HepG2 (cell line): ENCODE measurements at regions of chr20 and their contacts with region 1.

Region 1: DNA sequence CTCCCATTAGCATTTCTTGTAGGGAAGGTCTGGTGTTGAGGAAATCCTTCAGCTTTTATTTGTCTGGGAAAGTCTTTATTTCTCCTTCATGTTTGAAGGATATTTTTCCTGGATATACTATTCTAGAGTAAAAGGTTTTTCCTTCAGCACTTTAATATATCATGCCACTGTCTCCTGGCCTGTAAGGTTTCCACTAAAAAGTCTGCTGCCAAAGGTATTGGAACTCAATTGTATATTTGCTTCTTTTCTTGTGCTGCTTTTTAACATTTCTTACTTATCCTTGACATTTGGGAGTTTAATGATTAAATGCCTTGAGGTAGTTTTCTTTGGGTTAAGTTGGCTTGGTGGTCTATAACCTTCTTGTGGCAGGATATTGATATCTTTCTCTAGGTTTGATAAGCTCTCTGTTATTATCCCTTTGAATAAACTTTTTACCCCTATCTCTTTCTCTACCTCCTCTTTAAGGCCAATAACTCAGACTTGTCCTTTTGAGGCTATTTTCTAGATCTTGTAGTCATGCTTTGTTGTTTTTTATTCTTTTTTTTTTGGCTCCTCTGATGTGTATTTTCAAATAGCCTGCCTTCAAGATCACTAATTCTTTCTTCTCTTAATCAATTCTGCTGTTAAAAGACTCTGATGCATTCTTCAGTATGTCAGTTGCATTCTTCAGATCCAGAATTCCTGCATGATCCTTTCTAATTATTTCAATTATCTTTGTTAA is 225.0 kb upstream of the ZNF217 start:
- DNase-seq: no peak
- ATAC-seq: no peak
- H3K4me3 ChIP-seq: no peak overlapping the region
- H3K27ac ChIP-seq: no peak overlapping the region
- H3K4me1 ChIP-seq: peaks cover 10% of the 10 kb centered on the region; the same call in 1 of the 2 replicates
- H3K27me3 ChIP-seq: no peaks in the 10 kb centered on the region
- CTCF ChIP-seq: no peak
- EP300 ChIP-seq: no peak
- POLR2A ChIP-seq: no peak
- RAD21 ChIP-seq: no peak

Region 2: DNA sequence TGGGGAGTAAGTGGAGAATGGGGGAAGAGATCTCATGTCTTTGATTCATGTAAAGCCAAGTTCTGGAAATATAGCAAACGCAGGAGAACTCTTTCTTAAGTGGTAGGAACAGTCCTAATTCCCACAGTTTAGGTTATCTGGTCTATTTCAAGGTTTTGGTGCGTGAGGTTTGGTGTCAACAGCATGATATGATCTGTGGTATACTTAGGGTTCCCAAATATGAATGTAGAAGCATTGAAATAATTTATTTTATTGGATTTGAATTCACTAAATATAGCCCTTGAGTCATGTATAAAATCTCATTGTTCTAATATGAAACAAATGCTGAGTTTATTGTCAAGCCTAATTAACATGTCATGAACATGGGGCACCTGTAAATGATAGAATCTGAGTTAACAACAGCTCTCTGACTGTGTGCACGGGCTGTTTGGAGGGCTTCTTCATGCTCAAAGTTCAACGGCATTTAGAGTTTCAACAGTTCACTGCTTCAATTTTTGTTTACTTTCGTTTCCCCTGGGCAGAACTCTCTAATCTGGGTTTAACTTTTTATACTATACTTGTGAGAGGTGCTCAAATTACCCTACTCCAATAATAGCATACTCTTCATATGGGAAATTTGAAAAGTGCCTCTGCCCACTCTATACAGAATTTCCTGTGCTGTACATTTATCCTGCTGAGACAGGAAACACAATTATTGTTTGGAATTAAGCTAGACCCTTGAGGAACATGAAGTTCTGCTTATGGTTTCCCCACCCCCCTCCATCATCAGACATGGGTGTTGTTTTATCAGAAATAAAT is 11.3 kb after region 1 on chr20:
- CTCF ChIA-PET with region 1: no interaction called
- POLR2A ChIA-PET with region 1: no interaction called
- in situ Hi-C with region 1: no loop called
- intact Hi-C with region 1: loop called (anchors 1 kb)
- DNase-seq: peak; percentile 94
- ATAC-seq: peak; percentile 96
- H3K4me3 ChIP-seq: peak overlapping the region in 2 of 3 experiments; percentile 25 to 33; a peak in 4 of 6 replicates
- H3K27ac ChIP-seq: peak overlapping the region; percentile 70
- H3K4me1 ChIP-seq: peaks cover 64% of the 10 kb centered on the region
- H3K27me3 ChIP-seq: no peaks in the 10 kb centered on the region
- CTCF ChIP-seq: no peak
- EP300 ChIP-seq: peak in 1 of 2 experiments; percentile 74; a peak in 2 of 4 replicates
- POLR2A ChIP-seq: no peak
- RAD21 ChIP-seq: no peak